ENCODE measurements at regions of chr6 and their contacts with region 1.

Region 1: GRCh38 chr6:7615611-7616383 is 25.8 kb downstream of the SNRNP48 start:
- DNase-seq: peak in 1 of 5 donors; percentile 34
- H3K4me3 ChIP-seq: no peak overlapping the region
- H3K27ac ChIP-seq: no peak overlapping the region
- H3K4me1 ChIP-seq: peaks cover 2% of the 10 kb centered on the region
- H3K27me3 ChIP-seq: no peaks in the 10 kb centered on the region
- CTCF ChIP-seq: peak; percentile 48 to 61 (median 57)
- EP300 ChIP-seq: no peak
- POLR2A ChIP-seq: no peak

Region 2: DNA sequence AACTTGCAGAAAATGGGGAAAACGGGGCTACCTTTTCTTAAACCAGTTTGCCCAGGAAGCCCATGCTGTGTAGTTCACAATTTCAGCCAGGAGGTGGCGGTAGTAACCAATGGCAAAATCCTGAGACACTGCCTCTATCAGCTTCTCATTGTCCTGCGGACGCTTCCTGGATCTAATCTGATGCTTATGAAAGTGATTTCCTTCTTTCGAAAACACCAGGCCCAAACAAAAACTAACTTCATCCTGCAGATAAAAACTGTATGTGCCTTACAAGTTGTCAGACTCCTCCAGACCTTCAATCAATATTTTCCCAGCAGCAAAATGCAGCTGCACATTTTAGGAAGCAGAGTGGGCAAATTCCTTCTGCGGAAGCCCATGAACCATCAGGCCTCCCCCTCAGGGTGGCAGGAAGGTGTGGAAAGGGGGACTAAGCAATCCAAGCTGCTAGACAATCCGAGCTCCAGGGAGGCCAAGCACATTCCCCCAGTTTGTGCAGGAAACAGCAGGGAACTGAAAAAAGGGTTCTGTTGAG is 938.8 kb before region 1 on chr6:
- intact Hi-C with region 1: loop called in 2 of 4 experiments (anchors 10 kb)
- DNase-seq: peak; percentile 59 to 84 (median 82)
- H3K4me3 ChIP-seq: no peak overlapping the region
- H3K27ac ChIP-seq: no peak overlapping the region
- H3K4me1 ChIP-seq: no peaks in the 10 kb centered on the region
- H3K27me3 ChIP-seq: no peaks in the 10 kb centered on the region
- CTCF ChIP-seq: peak; percentile 81 to 95 (median 89)
- EP300 ChIP-seq: no peak
- POLR2A ChIP-seq: no peak

Region 3: DNA sequence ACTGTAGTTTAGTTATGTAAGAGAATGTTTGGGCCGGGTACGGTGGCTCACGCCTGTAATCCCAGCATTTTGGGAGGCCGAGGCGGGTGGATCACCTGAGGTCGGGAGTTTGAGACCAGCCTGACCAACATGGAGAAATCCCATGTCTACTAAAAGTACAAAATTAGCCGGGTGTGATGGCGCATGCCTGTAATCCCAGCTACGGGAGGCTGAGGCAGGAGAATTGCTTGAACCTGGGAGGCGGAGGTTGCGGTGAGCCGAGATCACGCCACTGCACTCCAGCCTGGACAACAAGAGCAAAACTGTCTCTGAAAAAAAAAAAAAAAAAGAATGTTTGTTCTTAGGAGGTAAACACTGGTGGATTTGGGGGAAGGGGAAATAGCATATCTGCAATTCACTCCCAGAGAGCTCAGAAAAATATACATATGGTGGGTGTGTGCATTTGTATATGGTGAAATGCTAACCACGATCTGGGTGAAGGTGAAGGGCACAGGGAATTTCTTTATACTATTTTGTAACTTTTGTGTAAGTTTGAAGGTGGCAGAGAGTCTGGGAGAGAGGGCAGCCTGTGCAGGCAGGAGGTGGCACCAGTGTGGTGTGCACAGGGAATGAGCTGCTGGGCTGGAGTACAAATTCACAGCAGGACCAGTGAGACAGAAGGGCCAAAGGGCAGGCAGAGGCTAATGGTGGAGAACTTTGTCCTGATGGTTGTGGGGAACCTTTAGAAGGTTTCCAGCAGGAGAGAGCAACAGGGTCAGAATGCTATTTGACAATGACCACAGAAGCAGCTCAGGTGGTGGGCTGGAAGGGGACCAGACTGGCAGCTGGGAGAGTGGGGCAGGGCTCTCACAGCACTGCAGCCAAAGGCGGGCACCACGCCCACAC is 345.2 kb before region 1 on chr6:
- intact Hi-C with region 1: loop called in 3 of 4 experiments (anchors 10 kb)
- DNase-seq: no peak
- H3K4me3 ChIP-seq: no peak overlapping the region
- H3K27ac ChIP-seq: no peak overlapping the region
- H3K4me1 ChIP-seq: no peaks in the 10 kb centered on the region
- H3K27me3 ChIP-seq: no peaks in the 10 kb centered on the region
- CTCF ChIP-seq: no peak
- EP300 ChIP-seq: no peak
- POLR2A ChIP-seq: no peak

Region 4: GRCh38 chr6:7282097-7282906 is 333.5 kb before region 1 on chr6:
- intact Hi-C with region 1: loop called (anchors 5 to 10 kb)
- DNase-seq: no peak
- H3K4me3 ChIP-seq: no peak overlapping the region
- H3K27ac ChIP-seq: no peak overlapping the region
- H3K4me1 ChIP-seq: no peaks in the 10 kb centered on the region
- H3K27me3 ChIP-seq: no peaks in the 10 kb centered on the region
- CTCF ChIP-seq: no peak
- EP300 ChIP-seq: no peak
- POLR2A ChIP-seq: no peak

Region 5: DNA sequence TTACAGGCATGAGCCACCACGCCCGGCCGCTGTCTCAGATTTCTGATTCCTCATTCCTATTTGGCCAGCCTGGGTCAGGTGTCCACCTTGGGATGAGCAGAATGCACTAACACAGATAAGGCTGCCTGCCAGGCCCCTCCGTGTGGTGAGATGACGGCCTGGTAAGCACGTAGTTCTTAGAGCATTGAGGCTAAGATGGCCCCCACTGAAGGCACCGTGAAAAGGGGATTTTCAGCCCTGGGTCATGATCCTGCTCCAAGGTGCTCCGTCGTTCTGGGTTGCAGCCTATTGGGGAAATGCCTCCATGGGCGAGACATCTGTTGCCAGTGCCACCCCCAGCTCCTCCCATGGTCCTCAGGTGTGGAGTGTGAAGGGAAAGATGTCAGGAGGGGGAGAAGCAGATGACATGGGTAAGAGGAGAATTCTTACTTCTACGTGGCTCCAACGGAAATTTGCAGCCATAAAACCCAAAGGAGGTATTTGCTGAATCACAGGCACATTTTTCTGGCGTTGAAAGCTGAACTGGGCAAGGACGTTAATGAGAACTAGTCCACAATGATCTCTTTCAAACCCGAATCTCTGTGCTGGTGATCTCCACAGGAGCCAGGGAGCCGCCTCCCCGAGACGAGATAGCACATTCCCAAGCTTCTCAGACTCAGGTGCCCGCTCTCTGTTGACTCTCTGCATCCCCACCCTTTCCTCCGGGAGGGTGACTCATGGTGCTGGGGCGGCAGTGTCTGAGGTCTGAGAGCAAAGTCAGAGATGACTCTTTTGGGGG is 76.1 kb after region 1 on chr6:
- intact Hi-C with region 1: no loop called
- DNase-seq: no peak
- H3K4me3 ChIP-seq: no peak overlapping the region
- H3K27ac ChIP-seq: no peak overlapping the region
- H3K4me1 ChIP-seq: no peaks in the 10 kb centered on the region
- H3K27me3 ChIP-seq: no peaks in the 10 kb centered on the region
- CTCF ChIP-seq: no peak
- EP300 ChIP-seq: no peak
- POLR2A ChIP-seq: no peak

Region 6: DNA sequence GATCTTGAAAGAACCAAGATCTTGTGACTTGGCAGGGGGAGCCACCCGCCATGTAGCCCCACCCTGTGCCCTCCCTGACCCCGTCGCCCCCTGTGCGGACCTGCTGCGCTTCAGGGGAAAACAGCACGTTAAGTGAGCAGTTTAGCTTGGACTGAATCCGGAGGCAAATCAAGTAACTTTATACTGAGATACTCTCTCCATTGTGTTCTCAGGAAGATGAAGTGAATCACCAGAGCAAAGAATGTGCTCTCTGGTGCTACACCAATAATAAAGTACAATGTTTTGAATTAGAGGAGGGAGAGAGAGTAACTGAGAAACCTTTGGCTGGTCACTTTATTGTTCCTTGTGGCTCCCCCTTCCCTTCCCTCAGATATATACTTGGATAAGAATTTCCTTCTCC is 211.3 kb after region 1 on chr6:
- intact Hi-C with region 1: no loop called
- DNase-seq: no peak
- H3K4me3 ChIP-seq: no peak overlapping the region
- H3K27ac ChIP-seq: no peak overlapping the region
- H3K4me1 ChIP-seq: peaks cover 11% of the 10 kb centered on the region
- H3K27me3 ChIP-seq: no peaks in the 10 kb centered on the region
- CTCF ChIP-seq: no peak
- EP300 ChIP-seq: no peak
- POLR2A ChIP-seq: no peak